CD14-positive monocyte (primary cell): ENCODE measurements at regions of chr16 and their contacts with region 1.

Region 1: DNA sequence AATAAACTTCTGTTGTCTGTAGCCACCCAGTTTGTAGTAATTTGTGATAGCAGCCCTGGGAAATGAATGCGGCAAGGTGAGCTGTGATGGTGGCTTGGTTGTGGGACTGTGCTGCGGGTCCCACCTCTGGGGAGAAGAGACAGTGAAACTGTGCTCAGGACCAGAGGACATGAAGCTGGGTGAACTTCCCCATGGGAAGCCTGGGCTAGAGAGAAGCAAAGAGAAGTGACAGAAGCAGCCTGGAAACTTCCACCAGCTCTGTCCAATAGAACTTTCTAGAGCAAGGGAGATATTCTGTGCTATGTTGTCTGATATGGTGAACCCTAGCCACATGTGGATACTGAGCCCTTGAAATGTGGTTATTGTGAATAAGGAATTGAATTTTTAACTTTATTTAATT is 51.5 kb upstream of the EMP2 start:
- DNase-seq: peak; percentile 28 to 59 (median 58)
- H3K4me3 ChIP-seq: no peak overlapping the region
- H3K4me3 Mint-ChIP-seq: no peak overlapping the region
- H3K27ac ChIP-seq: peak overlapping the region; percentile 33 to 44
- H3K27ac Mint-ChIP-seq: peak overlapping the region in 5 of 7 donors; percentile 10 to 86 (median 77)
- H3K4me1 ChIP-seq: peaks cover 61 to 77% of the 10 kb centered on the region in 2 donors
- H3K4me1 Mint-ChIP-seq: peaks cover 69% of the 10 kb centered on the region
- H3K27me3 ChIP-seq: no peaks in the 10 kb centered on the region
- H3K27me3 Mint-ChIP-seq: peaks cover 2% of the 10 kb centered on the region in 3 donors
- CTCF ChIP-seq: no peak

Region 2: GRCh38 chr16:10226141-10226986 is 405.5 kb before region 1 on chr16:
- intact Hi-C with region 1: no loop called
- DNase-seq: no peak
- H3K4me3 ChIP-seq: no peak overlapping the region
- H3K4me3 Mint-ChIP-seq: no peak overlapping the region
- H3K27ac ChIP-seq: no peak overlapping the region
- H3K27ac Mint-ChIP-seq: peak overlapping the region in 1 of 7 donors; percentile 46
- H3K4me1 ChIP-seq: no peaks in the 10 kb centered on the region
- H3K4me1 Mint-ChIP-seq: no peaks in the 10 kb centered on the region
- H3K27me3 ChIP-seq: no peaks in the 10 kb centered on the region
- H3K27me3 Mint-ChIP-seq: peaks cover 3 to 4% (median 3%) of the 10 kb centered on the region in 3 donors
- CTCF ChIP-seq: no peak

Region 3: GRCh38 chr16:10683170-10683569 is 51.3 kb after region 1 on chr16:
- intact Hi-C with region 1: no loop called
- DNase-seq: no peak
- H3K4me3 ChIP-seq: no peak overlapping the region
- H3K4me3 Mint-ChIP-seq: no peak overlapping the region
- H3K27ac ChIP-seq: no peak overlapping the region
- H3K27ac Mint-ChIP-seq: no peak overlapping the region
- H3K4me1 ChIP-seq: no peaks in the 10 kb centered on the region
- H3K4me1 Mint-ChIP-seq: no peaks in the 10 kb centered on the region
- H3K27me3 ChIP-seq: no peaks in the 10 kb centered on the region
- H3K27me3 Mint-ChIP-seq: peaks cover 0 to 13% (median 4%) of the 10 kb centered on the region in 3 donors
- CTCF ChIP-seq: no peak

Region 4: GRCh38 chr16:10737068-10737625 is 105.3 kb after region 1 on chr16:
- intact Hi-C with region 1: loop called in 1 of 2 experiments (anchors 5 kb)
- DNase-seq: peak; percentile 65 to 78 (median 73)
- H3K4me3 ChIP-seq: peak overlapping the region in 1 of 3 experiments; percentile 56
- H3K4me3 Mint-ChIP-seq: peak overlapping the region; percentile 64 to 76
- H3K27ac ChIP-seq: peak overlapping the region in 1 of 2 donors; percentile 54
- H3K27ac Mint-ChIP-seq: peak overlapping the region in 6 of 7 donors; percentile 35 to 93 (median 82)
- H3K4me1 ChIP-seq: peaks cover 24 to 26% of the 10 kb centered on the region in 2 donors
- H3K4me1 Mint-ChIP-seq: peaks cover 20% of the 10 kb centered on the region
- H3K27me3 ChIP-seq: no peaks in the 10 kb centered on the region
- H3K27me3 Mint-ChIP-seq: peaks cover 0 to 5% (median 2%) of the 10 kb centered on the region in 3 donors
- CTCF ChIP-seq: peak; percentile 95